Activated B cell treated with CpG ODN at 0.5 μM for 24 hours (primary cell): ENCODE measurements at regions of chr17 and their contacts with region 1.

Region 1: DNA sequence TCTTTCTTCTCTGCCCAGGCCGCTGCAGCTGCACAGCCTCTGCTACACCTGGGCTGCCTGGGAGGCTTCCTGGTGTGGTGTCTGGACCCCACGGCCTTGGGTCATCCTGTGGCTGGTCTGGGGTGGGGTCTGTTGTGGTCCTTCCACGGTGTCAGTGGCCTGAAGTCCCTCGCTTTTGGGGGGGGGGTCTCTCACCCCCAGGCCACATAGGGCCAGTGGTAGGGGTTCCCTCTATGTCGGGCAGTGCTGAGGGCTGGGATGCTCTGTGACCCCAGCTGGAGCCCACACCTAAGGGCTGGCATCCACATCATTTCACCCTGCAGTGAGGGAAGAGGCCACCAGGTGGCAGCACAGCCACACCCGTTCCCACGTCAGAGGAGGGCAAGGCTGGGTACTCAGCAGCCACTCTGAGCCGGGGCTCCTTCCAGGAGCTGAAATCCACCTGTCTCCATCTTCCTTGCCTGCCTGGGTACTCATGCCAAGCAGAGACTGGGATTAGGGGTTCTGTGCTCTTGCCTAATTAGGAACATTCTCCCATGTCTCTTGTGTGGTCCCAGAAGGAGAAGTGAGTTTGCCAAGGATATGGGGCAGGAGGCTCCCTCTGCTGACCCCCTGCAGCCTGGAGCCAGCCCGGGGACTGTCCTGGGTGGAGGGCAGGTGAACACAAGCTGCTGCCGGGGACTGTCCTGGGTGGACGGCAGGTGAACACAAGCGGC is 13.0 kb downstream of the ENGASE start:
- DNase-seq: peak; percentile 79
- ATAC-seq: peak; percentile 90
- H3K4me3 Mint-ChIP-seq: no peak overlapping the region
- H3K27ac Mint-ChIP-seq: no peak overlapping the region
- H3K4me1 Mint-ChIP-seq: no peaks in the 10 kb centered on the region
- H3K27me3 Mint-ChIP-seq: peaks cover 3% of the 10 kb centered on the region
- CTCF ChIP-seq: peak; percentile 86

Region 2: GRCh38 chr17:79192503-79193351 is 105.1 kb after region 1 on chr17:
- CTCF ChIA-PET with region 1: no interaction called
- POLR2A ChIA-PET with region 1: no interaction called
- intact Hi-C with region 1: no loop called
- DNase-seq: no peak
- ATAC-seq: no peak
- H3K4me3 Mint-ChIP-seq: no peak overlapping the region
- H3K27ac Mint-ChIP-seq: no peak overlapping the region
- H3K4me1 Mint-ChIP-seq: no peaks in the 10 kb centered on the region
- H3K27me3 Mint-ChIP-seq: peaks cover 35% of the 10 kb centered on the region
- CTCF ChIP-seq: no peak

Region 3: DNA sequence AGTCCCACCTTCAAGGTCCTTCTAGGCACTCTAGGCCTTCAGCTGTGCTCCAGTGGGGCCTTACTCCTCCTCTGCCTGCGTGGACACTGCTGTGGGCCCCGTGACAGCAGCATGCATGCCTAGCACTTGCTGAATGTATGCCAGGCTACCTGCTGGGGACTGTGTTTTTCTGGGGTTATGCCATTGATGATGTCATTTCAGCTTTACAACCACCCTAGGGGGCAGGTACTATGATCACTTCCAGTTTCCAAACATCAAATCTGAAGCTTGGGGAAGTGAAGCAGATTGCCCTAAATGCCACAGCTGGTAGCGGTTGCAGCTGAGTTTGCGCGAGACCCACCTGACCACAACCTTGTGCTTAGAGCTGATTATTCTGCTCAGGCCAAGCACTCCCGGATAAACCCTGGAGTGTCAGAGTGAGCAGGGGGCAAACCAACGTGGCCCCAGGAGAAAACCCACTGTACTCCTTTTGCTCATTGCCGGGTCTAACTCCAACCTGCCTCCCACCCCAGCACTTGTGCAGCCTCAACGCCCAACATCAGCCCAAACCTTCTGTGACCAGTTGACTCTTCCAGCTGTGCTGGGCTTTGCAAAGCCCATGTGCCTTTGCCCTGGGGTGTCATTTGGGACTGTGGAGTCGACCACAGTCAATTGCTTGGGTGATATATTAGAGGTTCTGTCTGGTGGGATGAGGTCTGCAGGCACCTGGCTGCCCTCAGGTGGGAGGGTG is 155.5 kb after region 1 on chr17:
- CTCF ChIA-PET with region 1: no interaction called
- POLR2A ChIA-PET with region 1: no interaction called
- intact Hi-C with region 1: no loop called
- DNase-seq: no peak
- ATAC-seq: peak; percentile 85
- H3K4me3 Mint-ChIP-seq: no peak overlapping the region
- H3K27ac Mint-ChIP-seq: no peak overlapping the region
- H3K4me1 Mint-ChIP-seq: peaks cover 8% of the 10 kb centered on the region
- H3K27me3 Mint-ChIP-seq: peaks cover 6% of the 10 kb centered on the region
- CTCF ChIP-seq: no peak

Region 4: GRCh38 chr17:79707931-79708891 is 620.6 kb after region 1 on chr17:
- CTCF ChIA-PET with region 1: no interaction called
- POLR2A ChIA-PET with region 1: no interaction called
- intact Hi-C with region 1: loop called (anchors 2 kb)
- DNase-seq: peak; percentile 61
- ATAC-seq: peak; percentile 64
- H3K4me3 Mint-ChIP-seq: peak overlapping the region; percentile 66
- H3K27ac Mint-ChIP-seq: no peak overlapping the region
- H3K4me1 Mint-ChIP-seq: peaks cover 6% of the 10 kb centered on the region
- H3K27me3 Mint-ChIP-seq: peaks cover 7% of the 10 kb centered on the region
- CTCF ChIP-seq: no peak